Natural killer cell (primary cell): ENCODE measurements at regions of chr1 and their contacts with region 1.

Region 1: GRCh38 chr1:39026051-39026865 is at the start of gene NDUFS5:
- DNase-seq: peak; percentile 74 to 92
- ATAC-seq: peak; percentile 92 to 95 (median 92)
- H3K4me3 ChIP-seq: peak within 1 kb of the TSS; percentile 98
- H3K4me3 Mint-ChIP-seq: peak within 1 kb of the TSS; percentile 93
- H3K27ac ChIP-seq: peak within 1 kb of the TSS; percentile 91
- H3K27ac Mint-ChIP-seq: peak within 1 kb of the TSS; percentile 89 to 95
- H3K4me1 ChIP-seq: peaks cover 19% of the 10 kb centered on the region
- H3K4me1 Mint-ChIP-seq: peaks cover 18 to 19% of the 10 kb centered on the region in 2 donors
- H3K27me3 ChIP-seq: peaks cover 2% of the 10 kb centered on the region
- H3K27me3 Mint-ChIP-seq: peaks cover 6 to 11% of the 10 kb centered on the region in 2 donors
- CTCF ChIP-seq: no peak
- total RNA-seq, gene NDUFS5: 63.6 to 72.9 (median 71.1) TPM

Region 2: DNA sequence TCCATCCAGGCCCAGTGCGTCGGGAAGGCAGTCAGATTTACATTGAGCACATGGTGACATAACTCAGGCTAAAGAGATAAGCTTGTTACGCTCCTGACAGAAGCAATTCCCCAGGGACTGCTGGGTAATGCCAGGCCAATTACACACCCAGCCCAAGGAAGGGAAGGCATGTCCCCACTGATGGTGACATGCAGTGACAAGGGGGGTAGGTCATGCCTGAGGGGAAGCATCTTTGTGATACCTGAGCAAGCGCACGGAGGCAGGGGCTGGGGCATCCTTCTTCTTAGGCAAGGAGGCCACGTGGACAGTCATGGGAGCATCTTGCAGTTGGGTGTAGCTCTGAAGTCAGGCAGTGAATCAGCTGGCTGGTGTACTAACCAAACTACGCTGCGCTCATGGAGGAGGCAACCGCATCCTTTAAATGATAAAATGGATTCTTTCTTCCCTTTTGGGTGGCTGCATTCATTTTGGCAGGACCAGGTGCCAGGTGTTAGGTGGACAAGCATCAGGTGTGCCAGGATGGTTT is 1952.3 kb before region 1 on chr1:
- intact Hi-C with region 1: no loop called
- DNase-seq: no peak
- ATAC-seq: no peak
- H3K4me3 ChIP-seq: no peak overlapping the region
- H3K4me3 Mint-ChIP-seq: no peak overlapping the region
- H3K27ac ChIP-seq: no peak overlapping the region
- H3K27ac Mint-ChIP-seq: no peak overlapping the region
- H3K4me1 ChIP-seq: no peaks in the 10 kb centered on the region
- H3K4me1 Mint-ChIP-seq: no peaks in the 10 kb centered on the region
- H3K27me3 ChIP-seq: no peaks in the 10 kb centered on the region
- H3K27me3 Mint-ChIP-seq: peaks cover 2 to 4% of the 10 kb centered on the region in 2 donors
- CTCF ChIP-seq: no peak

Region 3: GRCh38 chr1:38826262-38826661 is 200.0 kb before region 1 on chr1:
- intact Hi-C with region 1: no loop called
- DNase-seq: no peak
- ATAC-seq: no peak
- H3K4me3 ChIP-seq: no peak overlapping the region
- H3K4me3 Mint-ChIP-seq: no peak overlapping the region
- H3K27ac ChIP-seq: no peak overlapping the region
- H3K27ac Mint-ChIP-seq: no peak overlapping the region
- H3K4me1 ChIP-seq: no peaks in the 10 kb centered on the region
- H3K4me1 Mint-ChIP-seq: no peaks in the 10 kb centered on the region
- H3K27me3 ChIP-seq: no peaks in the 10 kb centered on the region
- H3K27me3 Mint-ChIP-seq: peaks cover 15 to 47% of the 10 kb centered on the region in 2 donors
- CTCF ChIP-seq: no peak

Region 4: DNA sequence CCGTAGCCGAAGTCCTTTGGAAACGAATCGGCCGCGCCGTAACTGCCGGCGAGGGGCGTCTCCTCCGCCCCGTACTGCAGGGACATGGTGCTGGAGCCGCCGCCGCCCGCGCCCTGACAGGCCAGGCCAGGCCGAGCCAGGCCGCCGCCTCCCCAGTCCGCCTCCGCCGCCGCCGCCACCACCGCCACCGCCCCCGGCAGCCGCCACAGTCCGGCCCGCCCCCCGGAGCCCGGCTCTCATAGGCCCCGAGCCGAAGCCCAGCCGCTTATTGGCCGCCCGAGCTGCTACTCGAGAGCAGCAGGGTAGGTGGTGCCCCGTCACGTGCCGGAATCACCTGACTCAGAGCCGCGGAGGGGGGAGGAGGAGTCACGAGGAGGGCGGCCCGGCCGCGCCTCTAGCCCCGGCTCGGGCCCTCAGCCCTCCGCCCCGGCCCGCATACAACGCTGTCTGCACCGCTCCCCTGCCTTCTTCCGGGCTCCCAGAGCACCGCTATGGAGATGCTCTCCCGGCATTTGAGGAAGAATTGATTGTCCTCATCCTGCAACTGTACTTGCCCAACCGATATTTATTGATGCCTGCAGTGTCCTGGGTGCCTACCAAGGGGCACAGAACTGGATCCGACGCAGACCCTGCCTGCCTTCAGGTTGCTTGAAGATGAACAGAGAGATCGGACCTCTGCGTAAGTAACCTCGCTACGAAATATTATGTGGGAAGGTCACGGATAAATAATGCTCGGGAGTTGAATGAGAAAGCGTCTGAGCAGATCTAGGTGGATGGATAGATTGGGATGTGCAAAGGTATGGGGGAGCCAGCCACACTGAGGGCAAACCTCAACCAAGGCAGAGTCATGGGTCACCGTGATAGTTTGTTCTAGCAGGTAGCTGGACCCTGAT is 166.5 kb before region 1 on chr1 and contains the start of gene RRAGC:
- intact Hi-C with region 1: loop called (anchors 2 kb)
- DNase-seq: peak; percentile 97 to 98
- ATAC-seq: peak; percentile 95 to 99 (median 97)
- H3K4me3 ChIP-seq: peak within 1 kb of the TSS; percentile 77
- H3K4me3 Mint-ChIP-seq: peak within 1 kb of the TSS; percentile 94
- H3K27ac ChIP-seq: peak within 1 kb of the TSS; percentile 62
- H3K27ac Mint-ChIP-seq: peak within 1 kb of the TSS; percentile 83 to 88
- H3K4me1 ChIP-seq: peaks cover 27% of the 10 kb centered on the region
- H3K4me1 Mint-ChIP-seq: peaks cover 25 to 41% of the 10 kb centered on the region in 2 donors
- H3K27me3 ChIP-seq: no peaks in the 10 kb centered on the region
- H3K27me3 Mint-ChIP-seq: no peaks in the 10 kb centered on the region
- CTCF ChIP-seq: no peak
- total RNA-seq, gene RRAGC: 15.9 to 24.9 (median 22.0) TPM

Region 5: DNA sequence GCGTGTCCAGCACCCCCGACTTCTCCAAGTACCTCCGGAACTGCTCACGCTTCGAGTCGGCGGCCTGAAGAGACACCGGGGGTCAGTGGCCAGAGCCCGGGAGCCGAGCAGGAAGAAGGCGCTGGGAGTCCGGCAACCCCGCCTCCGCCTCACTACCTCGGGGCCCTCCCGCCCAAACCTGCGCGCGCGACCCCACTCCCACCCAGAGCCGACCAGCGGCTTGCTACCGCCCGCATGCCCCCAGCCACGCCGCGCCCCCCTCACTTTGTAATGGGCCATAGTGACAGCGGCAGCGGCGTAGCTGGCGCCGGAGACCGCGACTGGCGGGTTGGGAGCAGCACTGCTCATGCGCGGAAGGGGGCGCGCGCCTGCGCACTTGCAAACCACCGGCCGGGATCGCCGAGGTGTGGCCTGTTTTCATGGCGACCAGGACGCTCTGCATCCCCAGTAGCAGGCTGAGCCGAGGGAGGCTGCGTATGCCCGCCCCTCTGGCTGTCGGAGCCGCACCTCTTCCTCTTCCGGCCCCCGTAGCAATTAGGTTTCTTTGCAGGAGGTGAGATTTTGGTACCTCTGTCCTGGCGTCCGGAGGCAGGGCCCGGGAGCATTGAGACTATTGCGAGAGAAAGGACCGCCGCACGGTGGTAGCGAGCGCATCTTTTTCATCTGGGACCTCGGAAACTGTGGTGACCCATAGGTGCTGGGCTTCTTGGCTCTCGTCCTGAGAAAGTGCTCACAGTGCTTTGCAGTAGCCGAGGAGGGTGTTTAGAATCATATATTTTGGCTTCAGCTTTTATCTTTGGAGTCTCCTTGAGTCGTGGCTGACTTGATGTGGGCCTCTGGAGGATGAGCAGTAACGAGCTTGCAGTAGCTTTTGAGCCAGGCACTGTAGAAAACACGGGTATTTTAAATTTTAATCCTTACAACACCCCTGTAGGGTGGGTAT is 153.0 kb before region 1 on chr1 and contains the start of gene MYCBP:
- intact Hi-C with region 1: loop called (anchors 5 kb)
- DNase-seq: peak; percentile 96 to 99
- ATAC-seq: peak; percentile 98 to 99 (median 99)
- H3K4me3 ChIP-seq: peak within 1 kb of the TSS; percentile 80
- H3K4me3 Mint-ChIP-seq: peak within 1 kb of the TSS; percentile 89
- H3K27ac ChIP-seq: peak within 1 kb of the TSS; percentile 65
- H3K27ac Mint-ChIP-seq: peak within 1 kb of the TSS; percentile 84 to 89
- H3K4me1 ChIP-seq: peaks cover 13% of the 10 kb centered on the region
- H3K4me1 Mint-ChIP-seq: peaks cover 22 to 25% of the 10 kb centered on the region in 2 donors
- H3K27me3 ChIP-seq: no peaks in the 10 kb centered on the region
- H3K27me3 Mint-ChIP-seq: no peaks in the 10 kb centered on the region
- CTCF ChIP-seq: no peak
- total RNA-seq, gene MYCBP: 5.7 to 11.4 (median 8.9) TPM

Region 6: GRCh38 chr1:38990738-38991639 is 35.3 kb before region 1 on chr1 and contains the start of gene AKIRIN1:
- intact Hi-C with region 1: loop called (anchors 2 kb)
- DNase-seq: peak; percentile 95 to 98
- ATAC-seq: peak; percentile 92 to 99 (median 93)
- H3K4me3 ChIP-seq: peak within 1 kb of the TSS; percentile 64
- H3K4me3 Mint-ChIP-seq: peak within 1 kb of the TSS; percentile 85
- H3K27ac ChIP-seq: peak within 1 kb of the TSS; percentile 93
- H3K27ac Mint-ChIP-seq: peak within 1 kb of the TSS; percentile 77 to 84
- H3K4me1 ChIP-seq: peaks cover 21% of the 10 kb centered on the region
- H3K4me1 Mint-ChIP-seq: peaks cover 29 to 35% of the 10 kb centered on the region in 2 donors
- H3K27me3 ChIP-seq: no peaks in the 10 kb centered on the region
- H3K27me3 Mint-ChIP-seq: peaks cover 0 to 3% of the 10 kb centered on the region in 2 donors
- CTCF ChIP-seq: no peak
- total RNA-seq, gene AKIRIN1: 70.4 to 80.7 (median 73.2) TPM

Region 7: GRCh38 chr1:39061951-39062350 is 35.7 kb after region 1 on chr1:
- intact Hi-C with region 1: no loop called
- DNase-seq: no peak
- ATAC-seq: no peak
- H3K4me3 ChIP-seq: no peak overlapping the region
- H3K4me3 Mint-ChIP-seq: no peak overlapping the region
- H3K27ac ChIP-seq: no peak overlapping the region
- H3K27ac Mint-ChIP-seq: no peak overlapping the region
- H3K4me1 ChIP-seq: no peaks in the 10 kb centered on the region
- H3K4me1 Mint-ChIP-seq: no peaks in the 10 kb centered on the region
- H3K27me3 ChIP-seq: no peaks in the 10 kb centered on the region
- H3K27me3 Mint-ChIP-seq: no peaks in the 10 kb centered on the region
- CTCF ChIP-seq: no peak